ENCODE measurements at regions of chr12 and their contacts with region 1.

Region 1: GRCh38 chr12:98516184-98516873 is 939 bp downstream of the TMPO start:
- DNase-seq: peak; percentile 83 to 93 (median 88)
- H3K4me3 ChIP-seq: peak overlapping the region; percentile 78 to 98
- H3K4me3 Mint-ChIP-seq: peak overlapping the region; percentile 96 to 100 (median 100)
- H3K27ac ChIP-seq: peak overlapping the region; percentile 94
- H3K27ac Mint-ChIP-seq: peak overlapping the region; percentile 97 to 100 (median 99)
- H3K4me1 ChIP-seq: peaks cover 64% of the 10 kb centered on the region
- H3K4me1 Mint-ChIP-seq: peaks cover 26 to 78% (median 47%) of the 10 kb centered on the region in 4 donors
- H3K27me3 ChIP-seq: no peaks in the 10 kb centered on the region
- H3K27me3 Mint-ChIP-seq: peaks cover 0 to 3% of the 10 kb centered on the region in 2 donors

Region 2: GRCh38 chr12:96906849-96907670 is 1609.3 kb before region 1 on chr12 and contains the start of gene NEDD1:
- CTCF ChIA-PET with region 1: no interaction called
- POLR2A ChIA-PET with region 1: interaction called, 3 read pairs
- intact Hi-C with region 1: loop called (anchors 5 kb)
- DNase-seq: peak; percentile 81 to 86 (median 82)
- H3K4me3 ChIP-seq: peak within 1 kb of the TSS; percentile 80 to 97
- H3K4me3 Mint-ChIP-seq: peak within 1 kb of the TSS; percentile 93 to 98 (median 96)
- H3K27ac ChIP-seq: peak within 1 kb of the TSS; percentile 96
- H3K27ac Mint-ChIP-seq: peak within 1 kb of the TSS; percentile 94 to 99 (median 99)
- H3K4me1 ChIP-seq: peaks cover 46% of the 10 kb centered on the region
- H3K4me1 Mint-ChIP-seq: peaks cover 37 to 55% (median 44%) of the 10 kb centered on the region in 4 donors
- H3K27me3 ChIP-seq: no peaks in the 10 kb centered on the region
- H3K27me3 Mint-ChIP-seq: peaks cover 0 to 2% of the 10 kb centered on the region in 2 donors
- total RNA-seq, gene NEDD1: 24.6 to 27.9 TPM

Region 3: DNA sequence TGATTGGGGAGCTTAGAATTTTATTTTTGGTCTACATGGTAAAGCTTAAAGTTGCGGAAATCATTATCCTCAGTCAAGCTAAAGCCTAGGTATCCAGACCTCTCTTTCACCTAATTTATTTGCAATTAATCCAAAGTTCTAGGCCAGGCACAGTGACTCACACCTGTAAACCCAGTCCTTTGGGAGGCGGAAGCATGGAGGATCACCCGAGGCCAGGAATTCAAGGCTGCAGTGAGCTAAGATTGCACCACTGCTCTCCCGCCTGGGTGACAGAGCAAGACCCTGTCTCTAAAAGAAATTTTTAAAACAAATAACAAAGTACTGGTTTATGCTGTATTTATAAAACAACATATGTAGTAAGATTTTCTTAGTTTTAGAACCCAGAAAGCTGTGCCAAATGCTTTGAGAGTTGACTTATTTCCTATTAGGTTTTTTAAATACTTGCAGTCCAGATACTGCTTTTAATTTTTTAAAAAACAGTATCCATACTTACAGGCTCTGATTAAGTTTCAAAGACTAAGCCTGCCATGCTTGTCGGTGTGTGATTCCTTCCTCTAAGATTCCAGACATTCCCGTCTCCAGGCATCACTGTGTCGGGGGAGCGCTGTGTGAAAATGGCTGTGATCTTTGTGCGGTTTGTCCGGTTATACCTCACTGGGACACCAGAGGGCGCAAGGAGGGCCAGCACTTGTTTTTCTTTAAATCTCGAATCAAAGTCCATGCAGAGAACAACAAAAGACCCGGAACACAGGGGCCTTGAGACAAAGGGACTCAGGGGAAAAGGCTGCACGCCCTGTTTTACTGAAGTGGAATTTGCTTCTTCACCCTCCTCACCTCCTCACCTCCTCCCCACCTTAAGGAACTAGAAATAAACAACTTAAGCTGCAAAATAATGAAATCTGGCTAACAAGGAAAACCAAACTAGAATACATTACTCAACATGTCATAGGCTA is 25.6 kb before region 1 on chr12:
- CTCF ChIA-PET with region 1: interaction called, 326 read pairs
- POLR2A ChIA-PET with region 1: interaction called, 109 read pairs
- intact Hi-C with region 1: loop called (anchors 1 kb)
- DNase-seq: peak; percentile 77 to 82 (median 79)
- H3K4me3 ChIP-seq: no peak overlapping the region
- H3K4me3 Mint-ChIP-seq: peak overlapping the region in 6 of 8 donors; percentile 28 to 78 (median 60)
- H3K27ac ChIP-seq: no peak overlapping the region
- H3K27ac Mint-ChIP-seq: peak overlapping the region; percentile 51 to 95 (median 92)
- H3K4me1 ChIP-seq: peaks cover 8% of the 10 kb centered on the region
- H3K4me1 Mint-ChIP-seq: peaks cover 4 to 7% (median 5%) of the 10 kb centered on the region in 4 donors
- H3K27me3 ChIP-seq: no peaks in the 10 kb centered on the region
- H3K27me3 Mint-ChIP-seq: peaks cover 0 to 1% of the 10 kb centered on the region in 2 donors

Region 4: DNA sequence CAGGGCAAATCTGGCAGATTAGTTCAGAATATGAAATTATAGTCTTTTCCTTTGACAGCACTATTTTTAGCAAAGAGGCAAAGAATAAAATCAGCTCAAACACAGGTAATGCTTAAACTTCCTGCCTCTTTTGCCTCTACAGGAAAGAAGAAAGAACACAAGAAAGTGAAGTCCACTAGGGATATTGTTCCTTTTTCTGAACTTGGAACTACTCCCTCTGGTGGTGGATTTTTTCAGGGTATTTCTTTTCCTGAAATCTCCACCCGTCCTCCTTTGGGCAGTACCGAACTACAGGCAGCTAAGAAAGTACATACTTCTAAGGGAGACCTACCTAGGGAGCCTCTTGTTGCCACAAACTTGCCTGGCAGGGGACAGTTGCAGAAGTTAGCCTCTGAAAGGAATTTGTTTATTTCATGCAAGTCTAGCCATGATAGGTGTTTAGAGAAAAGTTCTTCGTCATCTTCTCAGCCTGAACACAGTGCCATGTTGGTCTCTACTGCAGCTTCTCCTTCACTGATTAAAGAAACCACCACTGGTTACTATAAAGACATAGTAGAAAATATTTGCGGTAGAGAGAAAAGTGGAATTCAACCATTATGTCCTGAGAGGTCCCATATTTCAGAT is 16.5 kb after region 1 on chr12:
- CTCF ChIA-PET with region 1: interaction called, 59 read pairs
- POLR2A ChIA-PET with region 1: interaction called, 8 read pairs
- intact Hi-C with region 1: loop called (anchors 2 kb)
- DNase-seq: peak in 4 of 5 donors; percentile 41 to 50 (median 48)
- H3K4me3 ChIP-seq: no peak overlapping the region
- H3K4me3 Mint-ChIP-seq: no peak overlapping the region
- H3K27ac ChIP-seq: no peak overlapping the region
- H3K27ac Mint-ChIP-seq: peak overlapping the region in 6 of 7 donors; percentile 32 to 48 (median 42)
- H3K4me1 ChIP-seq: peaks cover under 1% of the 10 kb centered on the region
- H3K4me1 Mint-ChIP-seq: peaks cover 5 to 28% (median 12%) of the 10 kb centered on the region in 4 donors
- H3K27me3 ChIP-seq: no peaks in the 10 kb centered on the region
- H3K27me3 Mint-ChIP-seq: no peaks in the 10 kb centered on the region

Region 5: GRCh38 chr12:98644711-98645402 is 128.5 kb after region 1 on chr12 and contains the starts of genes APAF1 and IKBIP:
- CTCF ChIA-PET with region 1: no interaction called
- POLR2A ChIA-PET with region 1: interaction called, 7 read pairs
- intact Hi-C with region 1: loop called (anchors 2 kb)
- DNase-seq: peak; percentile 94 to 98 (median 96)
- H3K4me3 ChIP-seq: peak within 1 kb of the TSS; percentile 92 to 93
- H3K4me3 Mint-ChIP-seq: peak within 1 kb of the TSS; percentile 97 to 99 (median 98)
- H3K27ac ChIP-seq: peak within 1 kb of the TSS; percentile 73
- H3K27ac Mint-ChIP-seq: peak within 1 kb of the TSS; percentile 82 to 97 (median 96)
- H3K4me1 ChIP-seq: peaks cover 24% of the 10 kb centered on the region
- H3K4me1 Mint-ChIP-seq: peaks cover 14 to 40% (median 20%) of the 10 kb centered on the region in 4 donors
- H3K27me3 ChIP-seq: no peaks in the 10 kb centered on the region
- H3K27me3 Mint-ChIP-seq: no peaks in the 10 kb centered on the region
- total RNA-seq, gene APAF1: 30.8 to 32.2 TPM
- total RNA-seq, gene IKBIP: 7.7 to 8.2 TPM

Measured in CD4-positive, alpha-beta memory T cell (primary cell).